CD8-positive, alpha-beta T cell (primary cell): ENCODE measurements at regions of chr12 and their contacts with region 1.

Region 1: GRCh38 chr12:55073043-55074022 is 52.9 kb upstream of the OR9K2 start:
- DNase-seq: peak; percentile 47 to 88 (median 85)
- ATAC-seq: peak; percentile 60
- H3K4me3 ChIP-seq: no peak overlapping the region
- H3K4me3 Mint-ChIP-seq: no peak overlapping the region
- H3K27ac ChIP-seq: no peak overlapping the region
- H3K27ac Mint-ChIP-seq: no peak overlapping the region
- H3K4me1 ChIP-seq: no peaks in the 10 kb centered on the region
- H3K4me1 Mint-ChIP-seq: peaks cover 2% of the 10 kb centered on the region
- H3K27me3 ChIP-seq: no peaks in the 10 kb centered on the region
- H3K27me3 Mint-ChIP-seq: peaks cover 23% of the 10 kb centered on the region
- CTCF ChIP-seq: peak; percentile 79

Region 2: GRCh38 chr12:54701940-54702592 is 371.3 kb before region 1 on chr12:
- CTCF ChIA-PET with region 1: interaction called, 62 read pairs
- POLR2A ChIA-PET with region 1: no interaction called
- intact Hi-C with region 1: loop called (anchors 1 kb)
- DNase-seq: peak in 3 of 9 experiments; percentile 33 to 77 (median 69)
- ATAC-seq: peak; percentile 54
- H3K4me3 ChIP-seq: no peak overlapping the region
- H3K4me3 Mint-ChIP-seq: no peak overlapping the region
- H3K27ac ChIP-seq: no peak overlapping the region
- H3K27ac Mint-ChIP-seq: no peak overlapping the region
- H3K4me1 ChIP-seq: no peaks in the 10 kb centered on the region
- H3K4me1 Mint-ChIP-seq: no peaks in the 10 kb centered on the region
- H3K27me3 ChIP-seq: no peaks in the 10 kb centered on the region
- H3K27me3 Mint-ChIP-seq: peaks cover 5% of the 10 kb centered on the region
- CTCF ChIP-seq: peak; percentile 84

Region 3: DNA sequence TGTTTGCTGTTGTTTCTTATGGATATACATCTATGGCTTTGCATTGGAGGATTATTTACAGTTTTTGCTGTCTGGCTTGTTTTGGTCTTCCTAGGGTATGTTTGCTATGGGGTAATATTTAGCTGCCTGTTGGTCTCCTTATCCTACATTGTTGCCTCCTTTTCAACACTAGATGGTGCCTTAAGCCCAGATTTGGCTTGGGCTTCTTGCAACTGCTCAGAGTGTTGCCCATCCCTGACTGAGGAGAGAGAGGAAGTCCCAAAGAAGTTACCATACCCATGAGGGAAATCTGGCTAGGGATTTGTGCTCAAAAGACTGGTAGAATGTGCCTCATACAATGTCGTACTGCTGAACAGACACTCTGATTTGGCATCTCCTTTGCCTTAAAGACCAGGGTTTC is 313.6 kb before region 1 on chr12:
- CTCF ChIA-PET with region 1: interaction called, 17 read pairs
- POLR2A ChIA-PET with region 1: no interaction called
- intact Hi-C with region 1: no loop called
- DNase-seq: peak in 2 of 9 experiments; percentile 24 to 48
- ATAC-seq: no peak
- H3K4me3 ChIP-seq: no peak overlapping the region
- H3K4me3 Mint-ChIP-seq: no peak overlapping the region
- H3K27ac ChIP-seq: no peak overlapping the region
- H3K27ac Mint-ChIP-seq: no peak overlapping the region
- H3K4me1 ChIP-seq: no peaks in the 10 kb centered on the region
- H3K4me1 Mint-ChIP-seq: peaks cover 9% of the 10 kb centered on the region
- H3K27me3 ChIP-seq: no peaks in the 10 kb centered on the region
- H3K27me3 Mint-ChIP-seq: no peaks in the 10 kb centered on the region
- CTCF ChIP-seq: no peak

Region 4: DNA sequence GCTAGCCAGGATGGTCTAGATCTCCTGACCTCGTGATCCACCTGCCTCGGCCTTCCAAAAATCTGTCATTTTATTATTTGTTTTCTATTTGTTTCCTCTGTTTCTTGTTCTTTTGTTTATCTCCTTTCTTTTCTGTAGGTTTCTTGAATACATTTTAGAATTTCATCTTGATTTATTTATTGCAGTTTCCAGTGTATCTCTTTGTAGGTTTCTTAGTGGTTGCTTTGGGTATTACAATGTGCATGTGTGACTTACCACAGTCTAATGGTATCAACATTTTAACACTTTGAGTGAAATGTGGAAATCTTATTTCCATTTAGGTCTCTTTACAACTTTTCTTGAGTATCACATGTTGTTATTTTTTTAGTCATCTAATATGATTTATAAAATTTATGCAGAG is 248.9 kb before region 1 on chr12:
- CTCF ChIA-PET with region 1: no interaction called
- POLR2A ChIA-PET with region 1: no interaction called
- intact Hi-C with region 1: no loop called
- DNase-seq: no peak
- ATAC-seq: no peak
- H3K4me3 ChIP-seq: no peak overlapping the region
- H3K4me3 Mint-ChIP-seq: no peak overlapping the region
- H3K27ac ChIP-seq: no peak overlapping the region
- H3K27ac Mint-ChIP-seq: no peak overlapping the region
- H3K4me1 ChIP-seq: no peaks in the 10 kb centered on the region
- H3K4me1 Mint-ChIP-seq: no peaks in the 10 kb centered on the region
- H3K27me3 ChIP-seq: no peaks in the 10 kb centered on the region
- H3K27me3 Mint-ChIP-seq: peaks cover 5% of the 10 kb centered on the region
- CTCF ChIP-seq: peak; percentile 31

Region 5: DNA sequence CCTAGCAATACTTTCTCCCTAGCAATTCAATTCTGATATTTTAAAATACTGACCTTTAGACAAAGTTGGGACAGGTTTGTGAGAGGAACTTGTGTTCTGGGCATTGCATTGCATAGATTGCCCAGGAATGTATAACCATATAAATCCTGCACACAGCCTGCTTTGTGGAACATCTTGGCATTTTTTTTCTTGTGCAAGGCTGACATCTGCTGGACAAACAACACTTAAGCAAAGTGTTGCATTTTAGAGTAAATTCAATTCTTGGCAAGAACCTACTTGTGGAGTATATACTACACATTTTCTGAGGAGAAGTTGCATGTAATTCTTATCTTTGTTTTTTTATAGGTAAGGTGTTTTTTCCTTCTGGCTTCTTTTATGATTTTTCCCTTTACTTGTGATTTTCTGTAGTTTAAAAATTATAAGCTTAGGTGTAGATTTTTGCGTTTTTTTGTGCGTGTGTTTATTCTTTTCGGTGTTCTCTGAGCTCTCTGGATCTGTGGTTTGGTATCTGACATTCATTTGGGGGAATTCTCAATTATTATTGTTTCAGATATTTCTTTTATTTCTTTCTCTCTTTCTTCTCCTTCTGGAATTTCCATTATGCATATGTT is 115.2 kb before region 1 on chr12:
- CTCF ChIA-PET with region 1: interaction called, 58 read pairs
- POLR2A ChIA-PET with region 1: no interaction called
- intact Hi-C with region 1: loop called in 1 of 2 experiments (anchors 1 kb)
- DNase-seq: peak; percentile 4 to 78 (median 48)
- ATAC-seq: peak; percentile 67
- H3K4me3 ChIP-seq: no peak overlapping the region
- H3K4me3 Mint-ChIP-seq: no peak overlapping the region
- H3K27ac ChIP-seq: no peak overlapping the region
- H3K27ac Mint-ChIP-seq: peak overlapping the region; percentile 52
- H3K4me1 ChIP-seq: peaks cover 75% of the 10 kb centered on the region
- H3K4me1 Mint-ChIP-seq: peaks cover 85% of the 10 kb centered on the region
- H3K27me3 ChIP-seq: no peaks in the 10 kb centered on the region
- H3K27me3 Mint-ChIP-seq: no peaks in the 10 kb centered on the region
- CTCF ChIP-seq: peak; percentile 75

Region 6: GRCh38 chr12:55008944-55009585 is 64.3 kb before region 1 on chr12:
- CTCF ChIA-PET with region 1: interaction called, 754 read pairs
- POLR2A ChIA-PET with region 1: no interaction called
- intact Hi-C with region 1: no loop called
- DNase-seq: no peak
- ATAC-seq: no peak
- H3K4me3 ChIP-seq: no peak overlapping the region
- H3K4me3 Mint-ChIP-seq: no peak overlapping the region
- H3K27ac ChIP-seq: no peak overlapping the region
- H3K27ac Mint-ChIP-seq: no peak overlapping the region
- H3K4me1 ChIP-seq: no peaks in the 10 kb centered on the region
- H3K4me1 Mint-ChIP-seq: no peaks in the 10 kb centered on the region
- H3K27me3 ChIP-seq: no peaks in the 10 kb centered on the region
- H3K27me3 Mint-ChIP-seq: peaks cover 3% of the 10 kb centered on the region
- CTCF ChIP-seq: no peak

Region 7: GRCh38 chr12:55060470-55060869 is 12.9 kb before region 1 on chr12:
- CTCF ChIA-PET with region 1: interaction called, 34 read pairs
- POLR2A ChIA-PET with region 1: interaction called, 3 read pairs
- intact Hi-C with region 1: no loop called
- DNase-seq: no peak
- ATAC-seq: no peak
- H3K4me3 ChIP-seq: no peak overlapping the region
- H3K4me3 Mint-ChIP-seq: no peak overlapping the region
- H3K27ac ChIP-seq: no peak overlapping the region
- H3K27ac Mint-ChIP-seq: no peak overlapping the region
- H3K4me1 ChIP-seq: no peaks in the 10 kb centered on the region
- H3K4me1 Mint-ChIP-seq: no peaks in the 10 kb centered on the region
- H3K27me3 ChIP-seq: no peaks in the 10 kb centered on the region
- H3K27me3 Mint-ChIP-seq: peaks cover 3% of the 10 kb centered on the region
- CTCF ChIP-seq: no peak